Endothelial cell of umbilical vein (primary cell): ENCODE measurements at regions of chr15 and their contacts with region 1.

Region 1: GRCh38 chr15:40307421-40308211 is at the start of gene PLCB2:
- DNase-seq: no peak
- H3K4me3 ChIP-seq: no peak within 1 kb of the TSS
- H3K27ac ChIP-seq: no peak within 1 kb of the TSS
- H3K4me1 ChIP-seq: no peaks in the 10 kb centered on the region
- H3K27me3 ChIP-seq: peaks cover 4 to 5% of the 10 kb centered on the region in 2 experiments
- CTCF ChIP-seq: peak in 1 of 2 donors; percentile 42
- POLR2A ChIP-seq: no peak
- total RNA-seq, gene PLCB2: 1.5 and 4.3 TPM in 2 replicates

Region 2: GRCh38 chr15:40282144-40282868 is 25.3 kb before region 1 on chr15:
- CTCF ChIA-PET with region 1: interaction called, 403 read pairs
- POLR2A ChIA-PET with region 1: interaction called, 3 read pairs
- dilution Hi-C with region 1: no loop called
- intact Hi-C with region 1: loop called (anchors 1 kb)
- DNase-seq: peak; percentile 31
- H3K4me3 ChIP-seq: peak overlapping the region in 2 of 3 experiments; percentile 13 to 32
- H3K27ac ChIP-seq: no peak overlapping the region
- H3K4me1 ChIP-seq: peaks cover 12% of the 10 kb centered on the region
- H3K27me3 ChIP-seq: peaks cover 48 to 68% of the 10 kb centered on the region in 2 experiments
- CTCF ChIP-seq: peak; percentile 26 to 36
- POLR2A ChIP-seq: no peak

Region 3: DNA sequence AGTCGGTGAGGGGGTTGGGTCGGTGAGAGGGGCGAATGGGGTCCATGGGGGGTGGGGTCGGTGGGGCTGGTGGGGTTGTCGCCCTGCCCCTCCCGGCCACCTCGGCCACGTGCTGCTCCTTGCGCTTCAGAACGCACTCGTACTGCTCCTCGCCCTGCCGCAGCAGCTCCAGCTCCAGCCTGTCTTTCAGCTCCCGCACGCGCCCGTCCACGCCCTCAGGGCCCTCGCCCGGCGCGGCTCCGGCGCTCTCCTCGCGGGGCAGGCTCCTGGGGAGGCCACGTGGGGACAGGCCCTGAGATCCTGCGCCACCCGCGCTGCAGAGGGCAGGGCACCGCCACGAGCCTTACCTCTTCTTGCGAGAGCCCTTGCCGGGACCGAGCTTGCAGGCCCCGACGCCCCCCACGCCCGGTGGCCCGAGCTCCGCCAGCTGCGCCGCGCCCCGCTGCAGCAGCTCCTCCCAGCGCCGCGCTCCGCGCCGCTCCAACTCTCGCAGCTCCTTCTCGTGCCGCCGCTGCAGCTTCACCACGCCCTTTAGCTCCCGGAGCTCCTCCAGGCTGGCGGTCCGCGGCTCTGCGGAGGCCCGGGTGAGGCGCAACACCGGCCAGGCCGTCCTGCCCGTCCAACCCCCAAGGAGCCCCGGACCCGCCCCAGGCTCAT is 16.6 kb before region 1 on chr15:
- CTCF ChIA-PET with region 1: interaction called, 83 read pairs
- POLR2A ChIA-PET with region 1: no interaction called
- dilution Hi-C with region 1: no loop called
- intact Hi-C with region 1: no loop called
- DNase-seq: peak; percentile 36
- H3K4me3 ChIP-seq: peak overlapping the region in 1 of 3 experiments; percentile 23
- H3K27ac ChIP-seq: no peak overlapping the region
- H3K4me1 ChIP-seq: no peaks in the 10 kb centered on the region
- H3K27me3 ChIP-seq: peaks cover 0 to 27% of the 10 kb centered on the region in 2 experiments
- CTCF ChIP-seq: no peak
- POLR2A ChIP-seq: no peak

Region 4: DNA sequence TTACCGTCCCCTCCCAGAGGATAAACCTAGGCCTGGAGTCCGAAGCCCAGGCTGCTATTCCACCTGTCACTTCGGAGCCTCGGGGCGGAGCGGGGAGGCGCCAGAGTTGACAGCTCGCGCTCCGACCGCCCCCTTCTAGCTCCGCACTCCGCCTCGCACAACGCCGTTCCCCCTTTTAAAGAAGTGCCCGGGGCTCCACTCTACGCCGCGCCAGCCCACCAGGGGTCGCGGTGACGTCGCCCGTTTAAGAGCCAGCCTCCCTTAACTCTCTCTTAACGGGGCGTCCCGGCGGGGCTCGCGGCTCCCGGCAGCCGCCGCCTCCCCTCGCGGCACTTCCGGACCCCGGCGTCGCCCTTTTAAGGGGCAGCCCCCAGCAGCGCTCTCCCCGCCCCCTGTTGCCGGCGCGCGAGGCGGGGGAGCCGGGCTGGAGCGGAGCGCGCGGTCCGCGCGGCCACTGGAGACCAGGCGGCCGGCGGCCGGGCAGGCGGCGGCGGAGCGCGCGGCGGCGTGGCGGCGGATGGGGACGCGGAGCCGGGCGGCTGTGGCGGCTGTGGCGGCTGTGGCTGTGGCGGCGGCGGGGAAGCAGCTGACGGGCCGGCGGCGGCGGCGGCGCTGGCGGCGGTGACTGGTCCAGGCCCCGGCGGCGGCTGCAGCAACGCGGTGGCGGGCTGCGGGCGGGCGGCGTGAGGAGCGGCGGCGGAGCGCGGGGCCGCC is 15.8 kb after region 1 on chr15 and contains the start of gene INAFM2:
- CTCF ChIA-PET with region 1: interaction called, 12 read pairs
- POLR2A ChIA-PET with region 1: no interaction called
- dilution Hi-C with region 1: no loop called
- intact Hi-C with region 1: no loop called
- DNase-seq: peak; percentile 98
- H3K4me3 ChIP-seq: peak within 1 kb of the TSS; percentile 41 to 67 (median 57)
- H3K27ac ChIP-seq: peak within 1 kb of the TSS; percentile 8
- H3K4me1 ChIP-seq: peaks cover 50% of the 10 kb centered on the region
- H3K27me3 ChIP-seq: no peaks in the 10 kb centered on the region
- CTCF ChIP-seq: peak; percentile 74 to 83
- POLR2A ChIP-seq: peak; percentile 67
- total RNA-seq, gene INAFM2: 23.6 and 24.1 TPM in 2 replicates

Region 5: GRCh38 chr15:41304149-41304770 is 996.6 kb after region 1 on chr15:
- CTCF ChIA-PET with region 1: no interaction called
- POLR2A ChIA-PET with region 1: no interaction called
- dilution Hi-C with region 1: no loop called
- intact Hi-C with region 1: no loop called
- DNase-seq: no peak
- H3K4me3 ChIP-seq: no peak overlapping the region
- H3K27ac ChIP-seq: no peak overlapping the region
- H3K4me1 ChIP-seq: no peaks in the 10 kb centered on the region
- H3K27me3 ChIP-seq: no peaks in the 10 kb centered on the region
- CTCF ChIP-seq: no peak
- POLR2A ChIP-seq: no peak